Astrocyte of the cerebellum (primary cell): ENCODE measurements at regions of chr3 and their contacts with region 1.

Region 1: DNA sequence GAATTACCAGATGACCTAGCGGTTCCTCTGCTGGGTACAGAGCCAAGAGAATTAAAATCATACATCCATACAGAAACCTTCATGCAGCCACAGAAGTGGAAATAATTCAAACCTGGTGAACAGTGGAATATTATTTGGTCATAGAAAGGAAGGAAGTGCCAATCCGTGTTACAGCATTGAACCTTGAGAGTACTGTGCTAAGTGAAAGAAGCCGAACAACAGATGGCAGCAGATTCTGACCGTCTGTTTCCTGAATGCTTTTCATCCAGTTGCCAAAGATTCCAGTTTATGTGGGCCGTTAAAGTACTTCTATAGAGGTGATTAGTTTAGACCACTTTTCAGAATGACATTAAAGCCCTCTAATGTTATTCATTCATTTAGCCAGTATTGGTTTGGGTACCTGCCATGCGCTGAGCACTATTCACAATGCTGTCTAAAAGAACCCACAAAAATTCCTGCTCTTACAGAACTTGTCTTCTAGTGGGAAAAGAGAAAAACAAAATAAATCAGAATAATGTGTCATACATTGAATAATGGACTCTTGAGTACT is 45.8 kb upstream of the SENP5 start:
- DNase-seq: peak; percentile 66
- H3K4me3 ChIP-seq: no peak overlapping the region
- CTCF ChIP-seq: no peak

Region 2: DNA sequence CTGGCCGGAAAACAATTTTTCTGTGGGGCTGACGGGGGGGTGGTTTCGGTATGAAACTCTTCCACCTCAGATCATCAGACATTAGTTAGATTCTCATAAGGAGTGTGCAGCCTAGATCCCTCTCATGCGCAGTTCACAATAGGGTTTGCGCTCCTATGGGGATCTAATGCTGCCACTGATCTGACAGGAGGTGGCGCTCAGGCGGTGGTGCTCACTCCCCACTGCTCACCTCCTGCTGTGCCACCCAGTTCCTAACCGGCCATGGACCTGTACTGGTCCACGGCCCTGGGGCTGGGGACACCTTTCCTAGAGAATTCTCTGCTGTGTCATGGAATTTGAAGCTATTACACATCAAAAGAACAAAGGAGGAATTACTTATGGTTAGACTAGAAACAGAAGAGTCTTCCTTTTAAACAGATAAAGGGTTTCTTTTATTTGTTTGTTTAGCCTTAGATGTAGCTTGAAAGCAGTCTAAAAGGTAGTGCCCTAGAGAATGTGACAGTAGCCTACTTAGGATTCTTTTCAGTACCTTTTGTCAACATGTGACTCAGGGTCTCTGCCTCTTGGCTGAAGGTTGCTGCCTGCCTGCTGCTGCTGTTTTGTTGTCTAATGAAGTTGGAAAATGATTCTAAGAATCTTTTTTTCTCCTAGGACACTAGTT is 32.0 kb before region 1 on chr3:
- in situ Hi-C with region 1: loop called (anchors 5 kb)
- DNase-seq: no peak
- H3K4me3 ChIP-seq: no peak overlapping the region
- CTCF ChIP-seq: no peak

Region 3: GRCh38 chr3:196902296-196902695 is 80.4 kb after region 1 on chr3:
- in situ Hi-C with region 1: loop called (anchors 10 kb)
- DNase-seq: no peak
- H3K4me3 ChIP-seq: no peak overlapping the region
- CTCF ChIP-seq: no peak